Activated CD4-positive, alpha-beta T cell treated with anti-CD3 and anti-CD28 coated beads for 36 hours (primary cell): ENCODE measurements at regions of chr11 and their contacts with region 1.

Region 1: GRCh38 chr11:8099291-8099899 is 18.4 kb downstream of the TUB start:
- DNase-seq: peak; percentile 77
- ATAC-seq: peak; percentile 74
- H3K4me3 Mint-ChIP-seq: no peak overlapping the region
- H3K27ac Mint-ChIP-seq: no peak overlapping the region
- H3K4me1 Mint-ChIP-seq: no peaks in the 10 kb centered on the region
- H3K27me3 Mint-ChIP-seq: no peaks in the 10 kb centered on the region

Region 2: GRCh38 chr11:7892840-7893254 is 206.5 kb before region 1 on chr11:
- CTCF ChIA-PET with region 1: interaction called, 5 read pairs
- POLR2A ChIA-PET with region 1: no interaction called
- intact Hi-C with region 1: loop called (anchors 1 to 2 kb)
- DNase-seq: no peak
- ATAC-seq: peak; percentile 75
- H3K4me3 Mint-ChIP-seq: no peak overlapping the region
- H3K27ac Mint-ChIP-seq: no peak overlapping the region
- H3K4me1 Mint-ChIP-seq: peaks cover 4% of the 10 kb centered on the region
- H3K27me3 Mint-ChIP-seq: peaks cover 9% of the 10 kb centered on the region

Region 3: DNA sequence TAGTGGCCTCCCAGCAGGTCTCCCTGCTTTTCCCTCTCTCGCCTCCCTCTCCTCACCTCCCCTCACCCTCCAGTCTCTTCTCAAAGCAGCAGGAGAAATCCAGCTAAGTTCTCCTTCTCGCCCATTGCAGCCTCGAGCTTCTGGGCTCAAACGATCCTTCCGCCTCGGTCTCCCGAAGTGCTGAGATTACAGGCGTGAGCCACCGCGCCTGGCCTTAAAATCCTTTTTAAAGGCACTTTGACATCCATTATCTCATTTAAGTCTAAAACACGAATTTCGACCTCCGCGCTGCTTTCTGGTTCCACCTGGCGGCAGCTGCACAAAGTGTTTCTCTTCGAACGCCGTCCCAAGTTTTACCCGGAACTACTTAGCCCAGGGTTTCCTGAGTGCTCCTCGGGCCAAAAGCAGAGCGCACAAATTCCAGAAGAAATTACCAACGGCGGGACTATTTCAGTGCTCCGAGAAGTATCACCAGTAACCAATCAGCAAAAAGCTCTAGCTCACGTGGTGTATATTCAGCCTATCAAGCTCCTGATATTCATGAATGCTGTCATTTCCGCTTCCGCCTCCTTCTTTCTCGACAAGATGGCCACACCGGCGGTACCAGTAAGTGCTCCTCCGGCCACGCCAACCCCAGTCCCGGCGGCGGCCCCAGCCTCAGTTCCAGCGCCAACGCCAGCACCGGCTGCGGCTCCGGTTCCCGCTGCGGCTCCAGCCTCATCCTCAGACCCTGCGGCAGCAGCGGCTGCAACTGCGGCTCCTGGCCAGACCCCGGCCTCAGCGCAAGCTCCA is 112.4 kb before region 1 on chr11 and contains the start of gene EIF3F:
- CTCF ChIA-PET with region 1: interaction called, 11 read pairs
- POLR2A ChIA-PET with region 1: interaction called, 3 read pairs
- intact Hi-C with region 1: no loop called
- DNase-seq: peak; percentile 93
- ATAC-seq: peak; percentile 99
- H3K4me3 Mint-ChIP-seq: peak within 1 kb of the TSS; percentile 94
- H3K27ac Mint-ChIP-seq: peak within 1 kb of the TSS; percentile 99
- H3K4me1 Mint-ChIP-seq: peaks cover 37% of the 10 kb centered on the region
- H3K27me3 Mint-ChIP-seq: no peaks in the 10 kb centered on the region
- total RNA-seq, gene EIF3F: 270 to 289 TPM

Region 4: DNA sequence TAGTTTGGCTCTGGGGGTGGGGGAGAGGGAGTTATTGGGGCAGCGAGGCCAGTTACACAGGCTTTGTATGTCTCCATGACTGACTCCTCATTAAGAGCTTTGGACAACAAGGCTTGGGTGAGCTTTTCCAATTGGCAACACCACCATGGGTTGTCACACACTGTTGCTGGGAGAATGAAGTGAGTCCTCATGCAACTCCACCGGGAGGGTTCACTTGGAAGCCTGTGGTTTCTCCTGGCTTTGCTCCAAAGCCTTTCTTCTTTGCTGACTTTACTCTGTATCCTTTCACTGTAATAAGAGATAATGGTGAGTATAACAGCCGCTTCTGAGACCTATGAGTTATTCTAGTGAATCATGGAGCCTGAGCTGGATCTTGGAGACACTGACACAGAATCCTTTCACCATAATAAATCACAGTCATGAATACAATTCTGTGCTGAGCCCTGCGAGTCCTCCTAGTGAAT is 87.4 kb before region 1 on chr11:
- CTCF ChIA-PET with region 1: interaction called, 57 read pairs
- POLR2A ChIA-PET with region 1: no interaction called
- intact Hi-C with region 1: no loop called
- DNase-seq: no peak
- ATAC-seq: no peak
- H3K4me3 Mint-ChIP-seq: no peak overlapping the region
- H3K27ac Mint-ChIP-seq: no peak overlapping the region
- H3K4me1 Mint-ChIP-seq: no peaks in the 10 kb centered on the region
- H3K27me3 Mint-ChIP-seq: peaks cover 9% of the 10 kb centered on the region

Region 5: GRCh38 chr11:8018484-8019313 is 80.7 kb before region 1 on chr11:
- CTCF ChIA-PET with region 1: interaction called, 12 read pairs
- POLR2A ChIA-PET with region 1: no interaction called
- intact Hi-C with region 1: no loop called
- DNase-seq: peak; percentile 67
- ATAC-seq: peak; percentile 57
- H3K4me3 Mint-ChIP-seq: peak overlapping the region; percentile 56
- H3K27ac Mint-ChIP-seq: no peak overlapping the region
- H3K4me1 Mint-ChIP-seq: peaks cover 10% of the 10 kb centered on the region
- H3K27me3 Mint-ChIP-seq: peaks cover 30% of the 10 kb centered on the region

Region 6: DNA sequence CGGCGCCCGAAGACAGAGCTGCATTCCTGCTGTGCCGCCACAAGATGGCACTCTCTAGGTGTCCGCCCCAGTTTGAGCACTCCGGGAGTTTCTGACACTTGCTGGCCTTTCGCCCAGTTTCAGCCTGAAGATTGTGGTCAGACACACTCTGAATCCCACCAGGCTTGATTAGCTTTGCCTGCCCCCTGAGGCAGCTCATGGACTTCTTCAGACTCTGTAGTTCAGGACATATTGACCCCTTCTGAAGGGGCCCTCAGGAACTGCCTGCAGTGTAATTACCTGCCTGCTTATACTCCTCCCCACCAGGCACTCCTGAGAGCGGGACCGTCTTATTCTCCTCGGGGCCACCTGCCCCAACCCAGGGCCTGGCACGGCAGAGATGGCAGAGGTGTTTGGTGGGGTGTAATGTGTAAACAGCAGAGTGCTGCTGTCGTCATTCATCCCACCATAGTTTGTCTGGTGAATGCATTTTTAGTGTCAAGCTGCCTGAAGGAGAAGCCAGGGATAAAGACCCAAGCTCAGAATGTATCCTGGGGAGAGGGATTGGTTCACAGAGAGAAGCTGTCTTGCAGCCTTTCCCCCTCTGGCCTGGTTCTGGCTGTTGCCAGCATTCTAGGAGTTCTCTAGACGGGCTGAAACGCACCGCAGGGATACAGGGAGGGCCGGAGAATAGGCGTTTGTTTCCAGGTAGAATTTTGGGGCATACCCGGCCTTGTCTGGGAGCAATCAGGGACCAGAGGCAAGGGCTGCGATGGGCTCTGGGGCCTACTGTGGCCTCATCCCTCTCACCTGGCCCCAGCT is 65.9 kb before region 1 on chr11:
- CTCF ChIA-PET with region 1: interaction called, 86 read pairs
- POLR2A ChIA-PET with region 1: no interaction called
- intact Hi-C with region 1: loop called (anchors 1 to 2 kb)
- DNase-seq: peak; percentile 73
- ATAC-seq: peak; percentile 80
- H3K4me3 Mint-ChIP-seq: no peak overlapping the region
- H3K27ac Mint-ChIP-seq: no peak overlapping the region
- H3K4me1 Mint-ChIP-seq: peaks cover 2% of the 10 kb centered on the region
- H3K27me3 Mint-ChIP-seq: peaks cover 20% of the 10 kb centered on the region

Region 7: DNA sequence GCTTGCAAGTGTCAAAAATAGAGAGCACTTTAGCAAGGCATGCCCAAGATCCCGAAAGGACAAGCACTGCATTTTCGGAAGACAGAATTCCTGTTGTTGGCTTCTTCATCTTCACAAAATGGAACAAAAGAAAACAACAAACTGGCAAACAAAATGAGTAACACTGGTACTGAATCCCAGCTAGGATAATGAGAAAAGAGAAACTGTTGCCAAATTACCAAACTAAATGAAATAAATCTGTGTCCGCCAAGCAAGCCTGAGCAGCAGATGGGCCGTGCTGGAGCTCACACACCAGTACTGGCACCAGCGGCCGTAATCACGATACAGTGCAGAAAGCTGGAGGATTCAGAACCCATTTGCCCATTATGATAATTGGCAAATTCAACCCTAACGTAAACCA is 12.2 kb after region 1 on chr11:
- CTCF ChIA-PET with region 1: interaction called, 24 read pairs
- POLR2A ChIA-PET with region 1: no interaction called
- intact Hi-C with region 1: no loop called
- DNase-seq: no peak
- ATAC-seq: no peak
- H3K4me3 Mint-ChIP-seq: no peak overlapping the region
- H3K27ac Mint-ChIP-seq: no peak overlapping the region
- H3K4me1 Mint-ChIP-seq: no peaks in the 10 kb centered on the region
- H3K27me3 Mint-ChIP-seq: no peaks in the 10 kb centered on the region